ENCODE measurements at regions of chr14 and their contacts with region 1.

Region 1: DNA sequence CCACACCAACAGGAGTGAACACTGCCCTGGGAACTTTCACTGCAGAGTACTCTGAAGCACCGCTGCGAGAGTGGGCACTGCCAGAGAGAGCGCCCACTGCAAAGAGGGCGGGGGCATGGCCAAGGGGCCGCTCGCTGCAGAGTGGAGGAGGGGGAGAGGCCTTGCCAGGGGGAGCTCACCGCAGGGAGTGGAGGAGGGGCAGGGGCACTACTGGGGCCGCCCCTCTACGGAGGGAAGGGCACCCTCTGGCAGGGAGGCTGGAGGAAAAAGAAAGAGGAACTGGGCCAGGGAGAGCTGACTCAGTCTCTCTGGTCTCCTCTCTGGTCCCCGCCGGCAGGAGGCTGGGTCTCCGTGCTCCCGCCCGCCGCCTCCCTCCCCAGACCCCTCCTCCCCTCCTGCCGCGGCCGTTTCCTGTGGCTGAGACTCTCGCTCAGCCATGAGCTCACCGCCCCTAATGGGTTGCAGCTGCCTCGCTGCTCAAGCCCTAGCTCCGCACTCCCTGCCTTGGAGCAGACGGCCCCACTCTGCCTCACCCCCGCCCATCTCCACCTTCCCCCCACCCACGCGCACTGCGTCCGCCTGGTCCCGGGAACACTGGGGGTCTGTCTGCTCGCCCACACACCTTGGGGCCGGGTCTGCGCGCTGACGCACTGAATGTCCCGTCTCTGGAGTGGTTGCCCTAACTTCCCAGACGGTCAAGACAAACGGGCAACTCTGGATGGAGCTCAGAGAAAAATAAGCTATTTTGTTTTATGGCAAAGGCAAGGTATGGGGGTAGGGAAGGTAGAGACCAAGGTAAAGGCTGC is 1.3 kb downstream of the ARHGEF40 start:
- DNase-seq: peak; percentile 94
- H3K4me3 ChIP-seq: peak overlapping the region; percentile 60 to 85 (median 64)
- H3K27ac ChIP-seq: peak overlapping the region; percentile 87 to 93 (median 88)
- H3K4me1 ChIP-seq: peaks cover 0 to 39% (median 36%) of the 10 kb centered on the region in 4 donors
- H3K27me3 ChIP-seq: no peaks in the 10 kb centered on the region
- CTCF ChIP-seq: no peak
- EP300 ChIP-seq: no peak
- POLR2A ChIP-seq: no peak

Region 2: GRCh38 chr14:21024585-21025370 is 46.6 kb before region 1 on chr14 and contains the start of gene NDRG2:
- intact Hi-C with region 1: loop called (anchors 2 kb)
- DNase-seq: peak; percentile 94
- H3K4me3 ChIP-seq: peak within 1 kb of the TSS; percentile 84 to 96 (median 88)
- H3K27ac ChIP-seq: peak within 1 kb of the TSS; percentile 93 to 95 (median 93)
- H3K4me1 ChIP-seq: peaks cover 0 to 43% (median 35%) of the 10 kb centered on the region in 4 donors
- H3K27me3 ChIP-seq: no peaks in the 10 kb centered on the region
- CTCF ChIP-seq: no peak
- EP300 ChIP-seq: no peak
- POLR2A ChIP-seq: peak in 1 of 2 donors; percentile 35
- total RNA-seq, gene NDRG2: 184 to 276 (median 235) TPM

Region 3: GRCh38 chr14:21098076-21098891 is 26.9 kb after region 1 on chr14 and contains the start of gene ZNF219:
- intact Hi-C with region 1: no loop called
- DNase-seq: peak; percentile 86
- H3K4me3 ChIP-seq: peak within 1 kb of the TSS; percentile 53 to 77 (median 72)
- H3K27ac ChIP-seq: peak within 1 kb of the TSS; percentile 92 to 98 (median 97)
- H3K4me1 ChIP-seq: peaks cover 0 to 66% (median 59%) of the 10 kb centered on the region in 4 donors
- H3K27me3 ChIP-seq: no peaks in the 10 kb centered on the region
- CTCF ChIP-seq: no peak
- EP300 ChIP-seq: no peak
- POLR2A ChIP-seq: no peak
- total RNA-seq, gene ZNF219: 38.2 to 89.7 (median 65.0) TPM

Region 4: DNA sequence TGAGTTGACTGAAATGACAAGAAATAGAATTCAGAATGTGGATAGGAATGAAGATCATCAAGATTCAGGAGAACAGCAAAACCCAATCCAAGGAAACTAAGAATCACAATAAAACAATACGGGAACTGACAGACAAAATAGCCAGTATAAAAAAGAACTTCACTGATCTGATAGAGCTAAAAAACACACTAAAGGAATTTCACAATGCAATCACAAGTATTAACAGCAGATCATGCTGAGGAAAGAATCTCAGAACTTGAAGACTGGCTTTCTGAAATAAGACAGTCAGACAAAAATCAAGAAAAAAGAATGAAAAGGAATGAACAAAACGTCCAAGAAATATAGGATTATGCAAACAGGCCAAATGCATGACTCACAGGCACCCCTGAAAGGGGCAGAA is 99.7 kb after region 1 on chr14:
- intact Hi-C with region 1: no loop called
- DNase-seq: no peak
- H3K4me3 ChIP-seq: no peak overlapping the region
- H3K27ac ChIP-seq: no peak overlapping the region
- H3K4me1 ChIP-seq: no peaks in the 10 kb centered on the region
- H3K27me3 ChIP-seq: no peaks in the 10 kb centered on the region
- CTCF ChIP-seq: no peak
- EP300 ChIP-seq: no peak
- POLR2A ChIP-seq: no peak

Region 5: GRCh38 chr14:21233457-21234076 is 162.1 kb after region 1 on chr14:
- intact Hi-C with region 1: no loop called
- DNase-seq: no peak
- H3K4me3 ChIP-seq: no peak overlapping the region
- H3K27ac ChIP-seq: no peak overlapping the region
- H3K4me1 ChIP-seq: peaks cover 0 to 73% (median 52%) of the 10 kb centered on the region in 4 donors
- H3K27me3 ChIP-seq: no peaks in the 10 kb centered on the region
- CTCF ChIP-seq: no peak
- EP300 ChIP-seq: no peak
- POLR2A ChIP-seq: no peak